ENCODE measurements at regions of chr7 and their contacts with region 1.

Region 1: GRCh38 chr7:17298207-17298839 is at the start of gene AHR:
- DNase-seq: peak; percentile 74 to 94 (median 88)
- ATAC-seq: peak; percentile 80
- H3K4me3 ChIP-seq: peak within 1 kb of the TSS; percentile 50 to 69
- H3K4me3 Mint-ChIP-seq: peak within 1 kb of the TSS; percentile 92
- H3K27ac ChIP-seq: peak within 1 kb of the TSS; percentile 73
- H3K27ac Mint-ChIP-seq: peak within 1 kb of the TSS; percentile 92
- H3K4me1 ChIP-seq: peaks cover 26% of the 10 kb centered on the region
- H3K4me1 Mint-ChIP-seq: peaks cover 35% of the 10 kb centered on the region
- H3K27me3 ChIP-seq: peaks cover 0 to 1% of the 10 kb centered on the region in 2 experiments
- H3K27me3 Mint-ChIP-seq: no peaks in the 10 kb centered on the region
- CTCF ChIP-seq: no peak
- total RNA-seq, gene AHR: 54.0 to 54.1 TPM

Region 2: GRCh38 chr7:16420649-16421332 is 877.5 kb before region 1 on chr7:
- CTCF ChIA-PET with region 1: no interaction called
- POLR2A ChIA-PET with region 1: interaction called, 4 read pairs
- intact Hi-C with region 1: loop called (anchors 5 kb)
- DNase-seq: peak; percentile 46 to 95 (median 82)
- ATAC-seq: peak; percentile 92
- H3K4me3 ChIP-seq: peak overlapping the region; percentile 67 to 71
- H3K4me3 Mint-ChIP-seq: peak overlapping the region; percentile 87
- H3K27ac ChIP-seq: peak overlapping the region; percentile 68 to 89
- H3K27ac Mint-ChIP-seq: peak overlapping the region; percentile 93
- H3K4me1 ChIP-seq: peaks cover 15% of the 10 kb centered on the region
- H3K4me1 Mint-ChIP-seq: peaks cover 29% of the 10 kb centered on the region
- H3K27me3 ChIP-seq: no peaks in the 10 kb centered on the region
- H3K27me3 Mint-ChIP-seq: no peaks in the 10 kb centered on the region
- CTCF ChIP-seq: no peak

Region 3: DNA sequence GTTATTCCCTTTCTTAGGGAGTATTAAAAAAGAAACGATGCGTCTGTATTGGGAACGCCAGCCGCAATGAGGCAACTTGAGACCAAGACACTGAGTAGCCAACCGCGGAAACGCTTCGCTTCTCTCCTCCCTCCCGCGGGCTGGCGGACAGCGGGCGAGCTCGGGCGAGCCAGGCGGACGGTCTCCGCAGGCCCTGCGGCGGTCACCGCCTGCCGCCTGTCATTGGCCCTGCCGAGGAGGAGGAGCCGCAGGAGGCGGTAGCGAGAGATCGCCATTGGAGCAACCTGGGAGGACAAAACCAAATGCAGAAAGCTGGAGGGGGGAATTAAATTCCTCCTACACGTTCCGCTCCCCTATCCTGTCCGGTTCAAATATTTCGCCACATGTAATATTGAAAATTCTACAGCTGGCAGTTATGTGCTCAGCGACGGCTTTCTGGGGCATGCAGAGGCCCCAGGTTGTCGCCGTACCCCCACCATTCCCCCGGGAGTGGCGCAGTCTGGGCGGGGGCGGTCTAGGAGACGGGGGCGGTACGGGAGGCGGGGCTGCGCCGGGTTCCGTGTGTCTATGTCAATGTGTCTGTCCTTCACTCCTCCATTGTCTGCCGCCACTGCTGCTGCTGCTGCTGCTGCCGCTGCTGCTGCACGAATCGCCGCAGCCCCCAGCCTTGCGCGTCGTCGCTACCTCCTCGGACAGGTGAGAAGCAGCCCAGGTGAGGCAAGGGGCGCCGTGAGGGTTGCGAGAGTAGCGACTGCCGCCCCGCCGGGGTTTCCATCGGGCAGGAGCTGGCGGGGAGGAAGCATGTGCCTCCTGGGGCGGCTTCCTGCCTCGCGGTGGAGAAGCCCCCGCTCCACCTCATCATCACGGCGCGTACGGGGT is 652.5 kb before region 1 on chr7 and contains the starts of genes ANKMY2 and BZW2:
- CTCF ChIA-PET with region 1: no interaction called
- POLR2A ChIA-PET with region 1: no interaction called
- intact Hi-C with region 1: loop called in 1 of 2 experiments (anchors 2 kb)
- DNase-seq: peak; percentile 84 to 97 (median 92)
- ATAC-seq: peak; percentile 83
- H3K4me3 ChIP-seq: peak within 1 kb of the TSS; percentile 96 to 99
- H3K4me3 Mint-ChIP-seq: peak within 1 kb of the TSS; percentile 99
- H3K27ac ChIP-seq: peak within 1 kb of the TSS; percentile 83 to 93
- H3K27ac Mint-ChIP-seq: peak within 1 kb of the TSS; percentile 99
- H3K4me1 ChIP-seq: peaks cover 42% of the 10 kb centered on the region
- H3K4me1 Mint-ChIP-seq: peaks cover 70% of the 10 kb centered on the region
- H3K27me3 ChIP-seq: no peaks in the 10 kb centered on the region
- H3K27me3 Mint-ChIP-seq: no peaks in the 10 kb centered on the region
- CTCF ChIP-seq: no peak
- total RNA-seq, gene ANKMY2: 3.9 TPM
- total RNA-seq, gene BZW2: 23.2 to 23.8 TPM

Region 4: GRCh38 chr7:16867328-16867727 is 431.0 kb before region 1 on chr7:
- CTCF ChIA-PET with region 1: no interaction called
- POLR2A ChIA-PET with region 1: no interaction called
- intact Hi-C with region 1: no loop called
- DNase-seq: no peak
- ATAC-seq: no peak
- H3K4me3 ChIP-seq: no peak overlapping the region
- H3K4me3 Mint-ChIP-seq: no peak overlapping the region
- H3K27ac ChIP-seq: no peak overlapping the region
- H3K27ac Mint-ChIP-seq: no peak overlapping the region
- H3K4me1 ChIP-seq: no peaks in the 10 kb centered on the region
- H3K4me1 Mint-ChIP-seq: no peaks in the 10 kb centered on the region
- H3K27me3 ChIP-seq: no peaks in the 10 kb centered on the region
- H3K27me3 Mint-ChIP-seq: peaks cover 2% of the 10 kb centered on the region
- CTCF ChIP-seq: no peak

Region 5: GRCh38 chr7:17009007-17009719 is 289.2 kb before region 1 on chr7:
- CTCF ChIA-PET with region 1: interaction called, 3 read pairs
- POLR2A ChIA-PET with region 1: no interaction called
- intact Hi-C with region 1: loop called in 1 of 2 experiments (anchors 1 kb)
- DNase-seq: peak in 2 of 9 experiments; percentile 33 to 48
- ATAC-seq: no peak
- H3K4me3 ChIP-seq: no peak overlapping the region
- H3K4me3 Mint-ChIP-seq: no peak overlapping the region
- H3K27ac ChIP-seq: no peak overlapping the region
- H3K27ac Mint-ChIP-seq: no peak overlapping the region
- H3K4me1 ChIP-seq: no peaks in the 10 kb centered on the region
- H3K4me1 Mint-ChIP-seq: peaks cover 9% of the 10 kb centered on the region
- H3K27me3 ChIP-seq: no peaks in the 10 kb centered on the region
- H3K27me3 Mint-ChIP-seq: no peaks in the 10 kb centered on the region
- CTCF ChIP-seq: no peak

Region 6: GRCh38 chr7:17144322-17144721 is 154.0 kb before region 1 on chr7:
- CTCF ChIA-PET with region 1: no interaction called
- POLR2A ChIA-PET with region 1: interaction called, 3 read pairs
- intact Hi-C with region 1: loop called (anchors 2 to 5 kb)
- DNase-seq: peak in 8 of 9 experiments; percentile 25 to 68 (median 50)
- ATAC-seq: peak; percentile 76
- H3K4me3 ChIP-seq: no peak overlapping the region
- H3K4me3 Mint-ChIP-seq: peak overlapping the region; percentile 62
- H3K27ac ChIP-seq: no peak overlapping the region
- H3K27ac Mint-ChIP-seq: peak overlapping the region; percentile 53
- H3K4me1 ChIP-seq: peaks cover 26% of the 10 kb centered on the region
- H3K4me1 Mint-ChIP-seq: peaks cover 43% of the 10 kb centered on the region
- H3K27me3 ChIP-seq: no peaks in the 10 kb centered on the region
- H3K27me3 Mint-ChIP-seq: no peaks in the 10 kb centered on the region
- CTCF ChIP-seq: no peak

Region 7: DNA sequence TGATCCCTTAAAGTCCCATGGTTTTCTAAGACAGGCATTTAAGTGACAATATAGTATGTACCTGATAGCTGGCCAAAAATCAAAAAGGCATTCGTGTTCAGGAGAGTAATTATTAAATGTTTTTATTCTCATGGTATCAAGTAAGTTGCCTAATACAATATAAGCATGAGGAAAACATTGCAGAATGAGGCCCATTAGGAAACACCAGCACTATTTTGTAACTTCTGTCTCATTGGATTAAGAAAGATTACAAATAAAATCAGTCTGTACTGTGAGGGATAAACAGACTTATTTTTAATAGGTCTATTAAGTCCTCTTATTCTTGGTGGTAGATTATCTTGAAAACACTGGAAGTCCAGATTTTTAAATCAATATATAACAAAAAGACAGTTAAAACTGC is 531.9 kb after region 1 on chr7:
- CTCF ChIA-PET with region 1: no interaction called
- POLR2A ChIA-PET with region 1: no interaction called
- intact Hi-C with region 1: no loop called
- DNase-seq: no peak
- ATAC-seq: no peak
- H3K4me3 ChIP-seq: no peak overlapping the region
- H3K4me3 Mint-ChIP-seq: no peak overlapping the region
- H3K27ac ChIP-seq: no peak overlapping the region
- H3K27ac Mint-ChIP-seq: no peak overlapping the region
- H3K4me1 ChIP-seq: no peaks in the 10 kb centered on the region
- H3K4me1 Mint-ChIP-seq: no peaks in the 10 kb centered on the region
- H3K27me3 ChIP-seq: no peaks in the 10 kb centered on the region
- H3K27me3 Mint-ChIP-seq: no peaks in the 10 kb centered on the region
- CTCF ChIP-seq: no peak

Region 8: DNA sequence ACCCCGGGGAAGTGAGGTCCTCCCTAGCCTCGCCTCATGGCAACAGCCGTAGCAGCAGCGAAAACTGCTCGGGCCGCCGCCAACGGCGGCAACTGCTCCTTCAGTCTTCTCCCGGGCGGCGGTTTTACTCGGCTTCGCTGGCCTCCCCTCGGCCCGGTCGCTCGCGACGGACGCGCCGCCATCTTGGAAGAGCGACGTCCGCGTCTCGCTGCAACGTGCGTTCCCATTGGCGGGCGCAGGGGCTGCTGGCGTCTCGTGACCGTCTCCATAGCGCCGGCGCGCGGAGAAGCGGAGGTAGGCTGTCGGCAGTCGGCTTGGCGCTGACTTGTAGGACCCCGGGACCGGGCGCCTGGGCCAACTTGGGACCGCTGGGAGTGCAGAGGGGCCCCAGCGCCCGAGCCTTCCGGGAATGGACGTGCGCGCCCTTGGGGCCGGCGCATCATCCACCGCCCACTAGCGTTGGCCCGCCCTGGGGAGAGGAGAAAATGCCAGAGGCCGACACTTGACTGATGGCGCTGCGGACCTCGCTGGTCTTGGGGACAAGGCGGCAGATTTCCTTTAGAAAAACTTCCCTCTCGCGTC is 642.1 kb after region 1 on chr7 and contains the start of gene SNX13:
- CTCF ChIA-PET with region 1: no interaction called
- POLR2A ChIA-PET with region 1: no interaction called
- intact Hi-C with region 1: loop called (anchors 5 kb)
- DNase-seq: peak; percentile 75 to 95 (median 91)
- ATAC-seq: peak; percentile 93
- H3K4me3 ChIP-seq: peak within 1 kb of the TSS; percentile 67 to 94
- H3K4me3 Mint-ChIP-seq: peak within 1 kb of the TSS; percentile 98
- H3K27ac ChIP-seq: peak within 1 kb of the TSS; percentile 95 to 98
- H3K27ac Mint-ChIP-seq: peak within 1 kb of the TSS; percentile 99
- H3K4me1 ChIP-seq: peaks cover 29% of the 10 kb centered on the region
- H3K4me1 Mint-ChIP-seq: peaks cover 52% of the 10 kb centered on the region
- H3K27me3 ChIP-seq: no peaks in the 10 kb centered on the region
- H3K27me3 Mint-ChIP-seq: no peaks in the 10 kb centered on the region
- CTCF ChIP-seq: no peak
- total RNA-seq, gene SNX13: 22.0 to 23.9 TPM